PC-9 (cell line): ENCODE measurements at regions of chr14 and their contacts with region 1.

Region 1: GRCh38 chr14:68795597-68796417 is 2.9 kb upstream of the ZFP36L1 start:
- DNase-seq: peak; percentile 72 to 90
- H3K4me3 ChIP-seq: peak overlapping the region; percentile 95
- H3K27ac ChIP-seq: peak overlapping the region; percentile 98
- H3K4me1 ChIP-seq: peaks cover 24% of the 10 kb centered on the region
- H3K27me3 ChIP-seq: no peaks in the 10 kb centered on the region
- CTCF ChIP-seq: peak; percentile 82

Region 2: DNA sequence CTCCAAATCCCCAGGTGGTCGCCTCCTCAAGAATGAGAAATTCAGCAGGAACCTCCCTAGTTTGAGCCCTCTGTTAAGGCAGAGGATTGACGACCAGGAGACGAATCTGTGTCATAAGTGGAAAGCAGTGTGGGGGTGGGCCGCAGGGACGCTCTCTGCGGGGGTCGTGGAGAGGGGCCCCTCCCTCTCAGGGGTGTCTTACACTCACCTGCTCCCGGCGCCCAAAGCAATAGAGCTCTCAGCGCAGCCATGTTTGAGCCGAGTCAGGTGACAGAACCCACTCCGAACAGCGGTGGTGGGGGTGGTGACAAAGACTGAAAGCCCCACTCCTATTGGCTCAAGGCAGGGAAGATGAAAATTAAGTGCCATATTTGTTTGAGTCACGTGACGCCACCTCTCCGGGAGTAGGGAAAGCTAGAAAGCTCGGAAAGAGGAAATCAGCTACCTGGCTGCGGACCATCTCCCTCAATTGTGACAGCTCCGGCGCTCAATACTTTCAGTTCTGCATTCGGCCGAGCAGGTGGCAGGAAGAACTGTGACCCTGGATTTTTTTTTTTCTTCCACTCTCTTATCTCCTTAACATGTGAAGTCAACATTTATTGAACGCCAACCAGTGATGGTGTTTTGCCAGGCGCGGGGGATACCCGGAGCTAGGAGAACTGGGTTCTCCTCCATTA is 979.3 kb before region 1 on chr14 and contains the start of gene ZFYVE26:
- CTCF ChIA-PET with region 1: no interaction called
- POLR2A ChIA-PET with region 1: interaction called, 11 read pairs
- intact Hi-C with region 1: no loop called
- DNase-seq: peak; percentile 88 to 94
- H3K4me3 ChIP-seq: peak within 1 kb of the TSS; percentile 83
- H3K27ac ChIP-seq: peak within 1 kb of the TSS; percentile 54
- H3K4me1 ChIP-seq: peaks cover 22% of the 10 kb centered on the region
- H3K27me3 ChIP-seq: no peaks in the 10 kb centered on the region
- CTCF ChIP-seq: no peak
- total RNA-seq, gene ZFYVE26: 18.9 and 19.2 TPM in 2 replicates

Region 3: DNA sequence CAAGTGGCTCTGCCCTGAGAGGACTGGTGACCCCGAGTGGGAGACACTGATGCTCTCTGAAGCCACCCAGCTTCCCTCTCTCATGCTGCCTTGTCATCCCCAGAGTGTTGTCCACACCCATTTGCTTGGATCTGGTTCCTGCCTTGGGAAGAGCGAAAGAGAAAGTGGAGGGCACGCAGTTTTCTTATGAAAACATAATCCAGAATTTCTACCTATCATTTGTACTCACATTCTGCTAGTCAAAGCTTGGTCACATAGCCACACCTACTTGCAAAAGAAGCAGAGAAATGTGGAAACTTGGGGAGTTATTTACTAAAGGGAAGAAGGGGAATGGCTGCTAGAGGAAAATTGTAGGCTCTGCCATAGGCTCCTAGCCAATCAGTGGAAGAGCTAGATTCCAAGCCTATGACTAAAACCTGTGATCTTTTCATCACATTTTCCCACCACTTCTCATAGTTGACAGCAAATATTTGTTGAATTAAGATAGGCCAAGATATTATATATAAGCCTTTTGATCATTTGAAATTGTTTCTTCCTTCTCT is 329.2 kb before region 1 on chr14:
- CTCF ChIA-PET with region 1: no interaction called
- POLR2A ChIA-PET with region 1: interaction called, 6 read pairs
- intact Hi-C with region 1: loop called (anchors 2 kb)
- DNase-seq: peak; percentile 65 to 100
- H3K4me3 ChIP-seq: peak overlapping the region; percentile 23; the same call in 1 of the 2 replicates
- H3K27ac ChIP-seq: peak overlapping the region; percentile 96
- H3K4me1 ChIP-seq: peaks cover 95% of the 10 kb centered on the region
- H3K27me3 ChIP-seq: no peaks in the 10 kb centered on the region
- CTCF ChIP-seq: no peak

Region 4: GRCh38 chr14:68520637-68521556 is 274.9 kb before region 1 on chr14:
- CTCF ChIA-PET with region 1: no interaction called
- POLR2A ChIA-PET with region 1: interaction called, 11 read pairs
- intact Hi-C with region 1: loop called (anchors 2 kb)
- DNase-seq: peak; percentile 86 to 91
- H3K4me3 ChIP-seq: no peak overlapping the region
- H3K27ac ChIP-seq: peak overlapping the region; percentile 69
- H3K4me1 ChIP-seq: peaks cover 52% of the 10 kb centered on the region
- H3K27me3 ChIP-seq: no peaks in the 10 kb centered on the region
- CTCF ChIP-seq: no peak

Region 5: GRCh38 chr14:68548194-68549056 is 247.4 kb before region 1 on chr14:
- CTCF ChIA-PET with region 1: no interaction called
- POLR2A ChIA-PET with region 1: interaction called, 14 read pairs
- intact Hi-C with region 1: no loop called
- DNase-seq: peak; percentile 77 to 86
- H3K4me3 ChIP-seq: no peak overlapping the region
- H3K27ac ChIP-seq: peak overlapping the region; percentile 96
- H3K4me1 ChIP-seq: peaks cover 70% of the 10 kb centered on the region
- H3K27me3 ChIP-seq: no peaks in the 10 kb centered on the region
- CTCF ChIP-seq: no peak

Region 6: GRCh38 chr14:69475194-69475818 is 679.5 kb after region 1 on chr14:
- CTCF ChIA-PET with region 1: no interaction called
- POLR2A ChIA-PET with region 1: interaction called, 15 read pairs
- intact Hi-C with region 1: no loop called
- DNase-seq: no peak
- H3K4me3 ChIP-seq: no peak overlapping the region
- H3K27ac ChIP-seq: no peak overlapping the region
- H3K4me1 ChIP-seq: peaks cover 22% of the 10 kb centered on the region
- H3K27me3 ChIP-seq: no peaks in the 10 kb centered on the region
- CTCF ChIP-seq: peak; percentile 64

Region 7: GRCh38 chr14:70611216-70611615 is 1815.4 kb after region 1 on chr14:
- CTCF ChIA-PET with region 1: no interaction called
- POLR2A ChIA-PET with region 1: interaction called, 18 read pairs
- intact Hi-C with region 1: no loop called
- DNase-seq: no peak
- H3K4me3 ChIP-seq: no peak overlapping the region
- H3K27ac ChIP-seq: no peak overlapping the region
- H3K4me1 ChIP-seq: peaks cover under 1% of the 10 kb centered on the region; the same call in 1 of the 2 replicates
- H3K27me3 ChIP-seq: no peaks in the 10 kb centered on the region
- CTCF ChIP-seq: no peak